ENCODE measurements at regions of chr13 and their contacts with region 1.

Region 1: DNA sequence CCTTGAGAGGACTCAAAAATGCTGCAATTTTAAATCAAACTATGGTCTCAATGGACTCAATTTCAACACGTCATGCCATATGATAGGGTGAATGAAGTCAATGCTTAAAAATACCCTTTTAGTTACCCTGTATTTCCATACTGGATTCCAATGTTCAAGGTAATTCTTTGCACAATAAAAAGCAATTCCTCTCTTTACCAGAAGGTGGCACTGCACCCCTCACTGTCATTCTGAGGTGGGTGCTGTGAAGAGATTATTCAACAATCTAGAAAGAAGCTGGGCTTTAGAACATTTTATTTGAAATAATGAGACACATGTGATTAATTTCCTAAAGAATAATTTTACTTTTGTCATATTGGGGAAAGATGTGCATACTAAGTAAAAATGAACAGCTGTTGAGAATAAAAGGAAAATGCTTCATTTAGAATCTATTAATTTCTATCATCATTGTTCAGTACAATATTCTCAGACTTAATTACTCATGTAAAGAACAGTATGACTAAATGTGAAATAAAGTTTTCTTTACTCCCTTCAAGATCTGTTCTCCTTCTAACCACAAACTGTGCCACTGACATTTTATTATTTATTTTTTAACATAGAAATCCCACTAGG is 789.1 kb downstream of the GPC5 start:
- DNase-seq: peak; percentile 46
- ATAC-seq: no peak; the same call in 1 of the 2 replicates
- H3K4me3 ChIP-seq: no peak overlapping the region
- H3K27ac ChIP-seq: no peak overlapping the region
- H3K4me1 ChIP-seq: no peaks in the 10 kb centered on the region
- H3K27me3 ChIP-seq: no peaks in the 10 kb centered on the region
- CTCF ChIP-seq: peak; percentile 78

Region 2: GRCh38 chr13:92355213-92355612 is 167.7 kb after region 1 on chr13:
- CTCF ChIA-PET with region 1: interaction called, 4 read pairs
- POLR2A ChIA-PET with region 1: no interaction called
- intact Hi-C with region 1: loop called (anchors 1 kb)
- DNase-seq: peak; percentile 1
- ATAC-seq: peak; percentile 66
- H3K4me3 ChIP-seq: no peak overlapping the region
- H3K27ac ChIP-seq: no peak overlapping the region
- H3K4me1 ChIP-seq: no peaks in the 10 kb centered on the region
- H3K27me3 ChIP-seq: no peaks in the 10 kb centered on the region
- CTCF ChIP-seq: peak; percentile 33; the same call in 1 of the 2 replicates

Region 3: GRCh38 chr13:92530364-92530763 is 342.9 kb after region 1 on chr13:
- CTCF ChIA-PET with region 1: no interaction called
- POLR2A ChIA-PET with region 1: no interaction called
- intact Hi-C with region 1: loop called (anchors 5 kb)
- DNase-seq: no peak
- ATAC-seq: no peak
- H3K4me3 ChIP-seq: no peak overlapping the region
- H3K27ac ChIP-seq: no peak overlapping the region
- H3K4me1 ChIP-seq: no peaks in the 10 kb centered on the region
- H3K27me3 ChIP-seq: no peaks in the 10 kb centered on the region
- CTCF ChIP-seq: no peak